Caco-2 (cell line): ENCODE measurements at regions of chr5 and their contacts with region 1.

Region 1: DNA sequence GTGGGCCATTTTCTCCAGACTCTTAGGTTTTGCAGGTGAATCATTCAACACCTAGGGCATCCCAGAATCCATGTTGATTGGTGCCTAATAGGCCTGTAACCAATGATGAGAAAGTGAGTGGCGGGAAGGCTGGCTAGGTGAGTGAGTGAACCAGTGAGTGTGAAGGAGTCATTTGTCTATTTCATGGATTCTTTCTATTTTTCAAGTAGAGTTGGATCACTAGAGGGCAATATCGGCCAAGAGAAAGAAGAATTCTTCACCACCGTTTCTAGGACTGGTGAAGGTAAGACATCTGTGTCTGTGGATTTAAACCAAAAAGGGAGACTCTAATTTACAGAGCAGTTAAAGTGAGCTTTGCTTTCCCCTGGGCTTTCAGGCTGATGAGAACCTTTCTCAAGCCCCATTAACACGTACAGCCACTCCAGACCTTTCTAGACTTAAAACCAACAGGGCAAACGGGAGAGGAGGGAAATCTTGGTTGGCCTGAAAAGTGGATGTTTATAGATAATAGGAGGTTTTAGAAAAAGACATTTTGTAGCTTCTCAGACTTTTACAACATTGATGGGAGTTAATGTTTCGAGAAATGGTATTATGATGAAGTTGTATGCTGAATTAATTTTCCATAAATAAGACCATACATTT is 114.3 kb upstream of the IL12B start:
- DNase-seq: peak in 1 of 2 experiments; percentile 56
- H3K4me3 ChIP-seq: no peak overlapping the region
- H3K4me3 Mint-ChIP-seq: no peak overlapping the region
- H3K27ac Mint-ChIP-seq: no peak overlapping the region
- H3K4me1 ChIP-seq: no peaks in the 10 kb centered on the region
- H3K4me1 Mint-ChIP-seq: no peaks in the 10 kb centered on the region
- H3K27me3 ChIP-seq: no peaks in the 10 kb centered on the region
- H3K27me3 Mint-ChIP-seq: peaks cover 13% of the 10 kb centered on the region
- CTCF ChIP-seq: peak; percentile 48 to 56

Region 2: GRCh38 chr5:159286420-159287035 is 158.0 kb before region 1 on chr5:
- CTCF ChIA-PET with region 1: no interaction called
- POLR2A ChIA-PET with region 1: no interaction called
- intact Hi-C with region 1: loop called (anchors 5 kb)
- DNase-seq: peak in 1 of 2 experiments; percentile 12
- H3K4me3 ChIP-seq: no peak overlapping the region
- H3K4me3 Mint-ChIP-seq: no peak overlapping the region
- H3K27ac Mint-ChIP-seq: no peak overlapping the region
- H3K4me1 ChIP-seq: peaks cover 7% of the 10 kb centered on the region; the same call in 1 of the 2 replicates
- H3K4me1 Mint-ChIP-seq: no peaks in the 10 kb centered on the region
- H3K27me3 ChIP-seq: no peaks in the 10 kb centered on the region
- H3K27me3 Mint-ChIP-seq: no peaks in the 10 kb centered on the region
- CTCF ChIP-seq: peak; percentile 26 to 40

Region 3: DNA sequence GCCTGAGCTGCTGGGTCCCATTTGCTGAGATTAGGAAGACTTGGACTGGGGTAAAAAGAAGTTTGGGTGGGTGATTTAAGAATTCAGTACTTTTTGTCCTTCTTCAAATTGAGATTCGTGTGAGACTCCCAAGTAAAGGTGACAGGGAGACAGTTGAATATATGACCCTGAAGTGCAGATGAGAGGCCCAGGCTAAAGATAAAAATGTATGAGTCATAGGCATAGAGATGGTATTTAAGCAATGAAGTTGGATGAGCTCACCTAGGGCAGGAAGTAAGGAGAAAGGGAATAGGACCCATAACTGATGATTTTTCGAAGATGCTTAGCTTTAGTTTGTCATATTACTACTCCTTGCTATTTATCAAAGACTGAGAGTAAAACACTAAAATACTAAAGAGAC is 215.8 kb after region 1 on chr5:
- CTCF ChIA-PET with region 1: no interaction called
- POLR2A ChIA-PET with region 1: no interaction called
- intact Hi-C with region 1: loop called (anchors 10 kb)
- DNase-seq: no peak
- H3K4me3 ChIP-seq: no peak overlapping the region
- H3K4me3 Mint-ChIP-seq: no peak overlapping the region
- H3K27ac Mint-ChIP-seq: no peak overlapping the region
- H3K4me1 ChIP-seq: peaks cover 6% of the 10 kb centered on the region; the same call in 1 of the 2 replicates
- H3K4me1 Mint-ChIP-seq: peaks cover 8% of the 10 kb centered on the region
- H3K27me3 ChIP-seq: no peaks in the 10 kb centered on the region
- H3K27me3 Mint-ChIP-seq: peaks cover 3% of the 10 kb centered on the region
- CTCF ChIP-seq: no peak

Region 4: GRCh38 chr5:159915904-159916840 is 471.6 kb after region 1 on chr5 and contains the start of gene ADRA1B:
- CTCF ChIA-PET with region 1: no interaction called
- POLR2A ChIA-PET with region 1: no interaction called
- intact Hi-C with region 1: loop called (anchors 1 kb)
- DNase-seq: peak; percentile 53 to 71
- H3K4me3 ChIP-seq: peak within 1 kb of the TSS; percentile 30
- H3K4me3 Mint-ChIP-seq: peak within 1 kb of the TSS; percentile 63
- H3K27ac Mint-ChIP-seq: no peak within 1 kb of the TSS
- H3K4me1 ChIP-seq: no peaks in the 10 kb centered on the region
- H3K4me1 Mint-ChIP-seq: no peaks in the 10 kb centered on the region
- H3K27me3 ChIP-seq: peaks cover 1% of the 10 kb centered on the region; the same call in 1 of the 2 replicates
- H3K27me3 Mint-ChIP-seq: peaks cover 34% of the 10 kb centered on the region
- CTCF ChIP-seq: peak; percentile 23 to 50
- total RNA-seq, gene ADRA1B: not detected in 2 replicates

Region 5: DNA sequence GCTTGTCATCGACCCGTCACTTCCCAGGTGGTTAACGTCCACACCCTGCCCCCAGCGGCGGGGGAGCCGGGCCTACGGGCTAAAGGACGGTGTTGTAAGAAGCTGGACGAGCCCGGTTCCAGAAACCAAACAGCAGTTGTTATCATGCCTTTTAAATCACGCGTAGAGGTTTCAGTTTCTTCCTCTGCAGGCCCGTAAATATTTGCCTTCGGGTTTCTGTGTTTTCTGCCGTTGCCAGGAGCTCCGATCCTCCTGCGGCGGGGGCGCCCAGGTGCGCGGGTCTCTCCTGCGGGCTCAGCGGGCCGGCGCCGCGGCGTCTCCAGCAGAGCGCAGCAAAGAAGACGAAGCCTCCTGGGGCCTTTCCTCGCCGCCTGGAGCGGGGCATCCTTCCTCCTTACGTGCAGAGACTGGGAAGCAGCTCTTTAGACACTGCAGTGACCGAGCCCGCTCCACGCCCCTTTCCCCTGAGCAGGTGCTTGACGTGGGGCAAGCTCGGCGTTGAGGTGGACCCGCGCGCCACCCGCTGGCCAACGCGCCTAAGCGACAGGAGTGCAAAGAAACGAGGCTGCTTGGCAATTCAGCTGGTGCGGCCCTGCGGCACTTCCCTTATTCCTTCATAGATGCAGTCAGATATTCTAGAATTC is 542.6 kb after region 1 on chr5:
- CTCF ChIA-PET with region 1: interaction called, 24 read pairs
- POLR2A ChIA-PET with region 1: no interaction called
- intact Hi-C with region 1: loop called (anchors 1 kb)
- DNase-seq: peak; percentile 88 to 90
- H3K4me3 ChIP-seq: peak overlapping the region; percentile 34
- H3K4me3 Mint-ChIP-seq: peak overlapping the region; percentile 64
- H3K27ac Mint-ChIP-seq: no peak overlapping the region
- H3K4me1 ChIP-seq: peaks cover 4% of the 10 kb centered on the region; the same call in 1 of the 2 replicates
- H3K4me1 Mint-ChIP-seq: no peaks in the 10 kb centered on the region
- H3K27me3 ChIP-seq: no peaks in the 10 kb centered on the region; the same call in none of the 2 replicates
- H3K27me3 Mint-ChIP-seq: peaks cover 28% of the 10 kb centered on the region
- CTCF ChIP-seq: peak; percentile 83 to 89